ENCODE measurements at regions of chr2 and their contacts with region 1.

Region 1: GRCh38 chr2:111897924-111898702 is at the start of gene MERTK:
- DNase-seq: peak; percentile 55
- ATAC-seq: peak; percentile 79
- H3K4me3 Mint-ChIP-seq: peak within 1 kb of the TSS; percentile 80
- H3K27ac Mint-ChIP-seq: no peak within 1 kb of the TSS
- H3K4me1 Mint-ChIP-seq: peaks cover 13% of the 10 kb centered on the region
- H3K27me3 Mint-ChIP-seq: peaks cover 33% of the 10 kb centered on the region
- CTCF ChIP-seq: no peak
- total RNA-seq, gene MERTK: 0.22 TPM in 1 of 2 replicates, not detected in the other

Region 2: DNA sequence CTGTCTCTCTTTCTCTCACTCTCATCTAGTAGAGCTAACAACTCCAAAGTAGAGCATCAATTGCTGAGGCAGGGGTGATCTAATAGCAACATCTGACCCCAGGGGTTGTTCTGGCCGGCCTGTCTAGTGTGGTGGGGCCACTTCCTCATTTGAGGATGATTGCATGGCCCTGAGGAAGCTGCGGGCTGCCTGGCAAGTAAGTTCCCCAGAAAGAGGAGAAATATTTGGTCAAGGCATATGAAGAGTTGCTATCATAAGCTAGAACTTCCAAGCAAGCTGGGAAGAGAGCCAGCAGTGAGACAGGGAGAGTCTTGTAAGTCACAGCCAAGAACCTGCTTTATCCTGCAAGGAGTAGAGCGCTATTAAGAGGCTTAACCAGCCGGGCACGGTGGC is 106.1 kb after region 1 on chr2:
- CTCF ChIA-PET with region 1: no interaction called
- POLR2A ChIA-PET with region 1: no interaction called
- intact Hi-C with region 1: loop called (anchors 5 kb)
- DNase-seq: no peak
- ATAC-seq: peak; percentile 68
- H3K4me3 Mint-ChIP-seq: no peak overlapping the region
- H3K27ac Mint-ChIP-seq: peak overlapping the region; percentile 19
- H3K4me1 Mint-ChIP-seq: peaks cover 27% of the 10 kb centered on the region
- H3K27me3 Mint-ChIP-seq: no peaks in the 10 kb centered on the region
- CTCF ChIP-seq: no peak

Measured in activated B cell treated with CpG ODN at 0.5 μM for 24 hours (primary cell).